K562 (cell line): ENCODE measurements at regions of chr22 and their contacts with region 1.

Region 1: GRCh38 chr22:22060200-22061084 is 77.9 kb upstream of the TOP3B start:
- DNase-seq: peak; percentile 96 to 99 (median 98)
- ATAC-seq: peak; percentile 97
- H3K4me3 ChIP-seq: no peak overlapping the region
- H3K27ac ChIP-seq: no peak overlapping the region
- H3K4me1 ChIP-seq: peaks cover 3 to 5% of the 10 kb centered on the region in 2 experiments; a peak in 3 of 5 replicates
- H3K27me3 ChIP-seq: peaks cover 36 to 37% of the 10 kb centered on the region in 2 experiments
- CTCF ChIP-seq: peak in 1 of 3 experiments; percentile 99; a peak in 2 of 6 replicates
- EP300 ChIP-seq: peak; percentile 35
- POLR2A ChIP-seq: no peak
- RAD21 ChIP-seq: peak in 1 of 2 experiments; percentile 65; a peak in 2 of 4 replicates

Region 2: GRCh38 chr22:21972293-21972779 is 88.1 kb before region 1 on chr22:
- CTCF ChIA-PET with region 1: interaction called, 12 read pairs
- POLR2A ChIA-PET with region 1: no interaction called
- in situ Hi-C with region 1: no loop called
- intact Hi-C with region 1: no loop called
- DNase-seq: peak; percentile 91 to 100 (median 99)
- ATAC-seq: peak; percentile 86
- H3K4me3 ChIP-seq: no peak overlapping the region
- H3K27ac ChIP-seq: no peak overlapping the region
- H3K4me1 ChIP-seq: peaks cover 0 to 19% of the 10 kb centered on the region in 2 experiments; a peak in 1 of 5 replicates
- H3K27me3 ChIP-seq: no peaks in the 10 kb centered on the region
- CTCF ChIP-seq: peak; percentile 97 to 100 (median 99)
- EP300 ChIP-seq: no peak
- POLR2A ChIP-seq: no peak
- RAD21 ChIP-seq: peak in 1 of 2 experiments; percentile 88; a peak in 2 of 4 replicates

Region 3: GRCh38 chr22:22043296-22044078 is 17.0 kb before region 1 on chr22:
- CTCF ChIA-PET with region 1: no interaction called
- POLR2A ChIA-PET with region 1: interaction called, 110 read pairs
- in situ Hi-C with region 1: no loop called
- intact Hi-C with region 1: no loop called
- DNase-seq: peak in 1 of 4 experiments; percentile 63
- ATAC-seq: peak; percentile 72
- H3K4me3 ChIP-seq: no peak overlapping the region
- H3K27ac ChIP-seq: no peak overlapping the region
- H3K4me1 ChIP-seq: peaks cover 0 to 5% of the 10 kb centered on the region in 2 experiments; a peak in 2 of 5 replicates
- H3K27me3 ChIP-seq: peaks cover 28 to 40% of the 10 kb centered on the region in 2 experiments
- CTCF ChIP-seq: no peak
- EP300 ChIP-seq: no peak
- POLR2A ChIP-seq: no peak
- RAD21 ChIP-seq: no peak

Region 4: GRCh38 chr22:22103078-22103875 is 42.8 kb after region 1 on chr22:
- CTCF ChIA-PET with region 1: interaction called, 3 read pairs
- POLR2A ChIA-PET with region 1: interaction called, 5 read pairs
- in situ Hi-C with region 1: no loop called
- intact Hi-C with region 1: loop called (anchors 5 kb)
- DNase-seq: peak; percentile 86 to 97 (median 93)
- ATAC-seq: peak; percentile 87
- H3K4me3 ChIP-seq: no peak overlapping the region
- H3K27ac ChIP-seq: no peak overlapping the region
- H3K4me1 ChIP-seq: peaks cover 0 to 2% of the 10 kb centered on the region in 2 experiments; a peak in 2 of 5 replicates
- H3K27me3 ChIP-seq: peaks cover 21 to 37% of the 10 kb centered on the region in 2 experiments
- CTCF ChIP-seq: no peak
- EP300 ChIP-seq: no peak
- POLR2A ChIP-seq: no peak
- RAD21 ChIP-seq: no peak

Region 5: GRCh38 chr22:22195265-22196017 is 135.0 kb after region 1 on chr22:
- CTCF ChIA-PET with region 1: interaction called, 18 read pairs
- POLR2A ChIA-PET with region 1: no interaction called
- in situ Hi-C with region 1: no loop called
- intact Hi-C with region 1: loop called (anchors 2 kb)
- DNase-seq: peak; percentile 99 to 100 (median 100)
- ATAC-seq: peak; percentile 99
- H3K4me3 ChIP-seq: no peak overlapping the region
- H3K27ac ChIP-seq: no peak overlapping the region
- H3K4me1 ChIP-seq: peaks cover 0 to 3% of the 10 kb centered on the region in 2 experiments; a peak in 1 of 5 replicates
- H3K27me3 ChIP-seq: peaks cover 14 to 33% of the 10 kb centered on the region in 2 experiments; a peak in 4 of 5 replicates
- CTCF ChIP-seq: peak; percentile 100
- EP300 ChIP-seq: peak; percentile 69
- POLR2A ChIP-seq: no peak
- RAD21 ChIP-seq: peak; percentile 93 to 100